Esophagus muscularis mucosa (tissue), 4 donors: ENCODE measurements at regions of chr7 and their contacts with region 1.

Region 1: GRCh38 chr7:6516387-6516983 is 34.8 kb downstream of the GRID2IP start:
- DNase-seq: peak; percentile 93
- H3K4me3 ChIP-seq: peak overlapping the region; percentile 28 to 45 (median 32)
- H3K27ac ChIP-seq: peak overlapping the region in 2 of 4 donors; percentile 26 to 52
- H3K4me1 ChIP-seq: peaks cover 3 to 9% (median 6%) of the 10 kb centered on the region in 4 donors
- H3K27me3 ChIP-seq: peaks cover 0 to 12% (median 0%) of the 10 kb centered on the region in 4 donors
- CTCF ChIP-seq: peak; percentile 80 to 89 (median 82)
- EP300 ChIP-seq: no peak
- POLR2A ChIP-seq: no peak

Region 2: DNA sequence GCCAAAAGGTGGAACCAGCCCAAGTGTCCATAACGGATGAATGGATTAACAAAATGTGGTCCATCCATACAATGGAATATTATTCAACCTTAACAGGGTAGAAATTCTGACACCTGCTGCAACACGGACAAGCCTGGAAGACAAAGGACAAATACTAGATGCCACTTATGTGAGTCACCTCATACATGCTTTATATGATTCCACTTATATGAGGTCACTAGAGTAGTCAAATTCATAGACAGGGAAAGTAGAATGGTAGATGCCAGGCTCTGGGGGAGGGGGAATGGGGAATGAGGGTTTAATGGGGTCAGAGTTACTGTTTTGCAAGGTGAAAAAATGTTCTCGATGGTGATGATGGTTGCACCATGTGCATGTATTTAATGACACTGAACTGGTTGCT is 210.0 kb before region 1 on chr7:
- intact Hi-C with region 1: no loop called
- DNase-seq: no peak
- H3K4me3 ChIP-seq: no peak overlapping the region
- H3K27ac ChIP-seq: no peak overlapping the region
- H3K4me1 ChIP-seq: no peaks in the 10 kb centered on the region
- H3K27me3 ChIP-seq: no peaks in the 10 kb centered on the region
- CTCF ChIP-seq: no peak
- EP300 ChIP-seq: no peak
- POLR2A ChIP-seq: no peak

Region 3: DNA sequence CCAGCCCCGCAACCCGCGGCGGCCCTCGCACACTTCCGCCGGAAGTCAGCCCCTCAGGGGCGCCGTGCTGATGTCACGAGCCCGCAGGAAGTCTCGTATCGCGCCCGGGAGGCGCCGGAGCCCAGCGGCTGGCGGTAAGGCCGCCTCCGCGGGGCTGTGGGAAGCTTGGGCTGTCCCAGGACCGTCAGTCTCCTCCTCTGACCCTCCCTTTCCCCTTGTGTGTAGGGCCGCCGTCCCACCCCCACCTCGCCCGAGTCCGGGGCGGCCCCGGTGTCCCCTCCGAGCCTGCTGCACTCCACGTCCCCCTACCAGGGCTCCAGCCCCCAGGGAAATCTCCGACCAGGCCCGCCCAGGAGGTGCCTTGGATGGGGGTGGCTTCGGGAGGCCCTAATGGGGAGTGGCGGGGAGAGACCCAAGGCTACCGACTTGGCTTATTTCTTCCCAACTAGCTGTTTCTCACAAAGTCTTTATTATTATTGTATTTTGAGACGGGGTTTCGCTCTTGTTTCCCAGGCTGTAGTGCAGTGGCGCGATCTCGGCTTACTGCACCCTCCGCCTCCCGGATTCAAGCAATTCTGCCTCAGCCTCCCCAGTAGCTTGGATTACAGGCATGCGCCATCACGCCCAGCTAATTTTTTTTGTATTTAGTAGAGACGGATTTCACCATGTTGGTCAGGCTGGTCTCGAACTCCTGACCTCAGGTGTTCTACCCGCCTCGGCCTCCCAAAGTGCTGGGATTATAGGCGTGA is 61.1 kb after region 1 on chr7 and contains the start of gene ZDHHC4:
- intact Hi-C with region 1: loop called (anchors 10 kb)
- DNase-seq: peak; percentile 95
- H3K4me3 ChIP-seq: peak within 1 kb of the TSS; percentile 66 to 87 (median 77)
- H3K27ac ChIP-seq: peak within 1 kb of the TSS; percentile 90 to 96 (median 94)
- H3K4me1 ChIP-seq: peaks cover 12 to 16% (median 15%) of the 10 kb centered on the region in 4 donors
- H3K27me3 ChIP-seq: no peaks in the 10 kb centered on the region
- CTCF ChIP-seq: peak in 1 of 3 experiments; percentile 24
- EP300 ChIP-seq: no peak
- POLR2A ChIP-seq: peak; percentile 89
- total RNA-seq, gene ZDHHC4: 41.5 to 57.4 (median 51.9) TPM

Region 4: DNA sequence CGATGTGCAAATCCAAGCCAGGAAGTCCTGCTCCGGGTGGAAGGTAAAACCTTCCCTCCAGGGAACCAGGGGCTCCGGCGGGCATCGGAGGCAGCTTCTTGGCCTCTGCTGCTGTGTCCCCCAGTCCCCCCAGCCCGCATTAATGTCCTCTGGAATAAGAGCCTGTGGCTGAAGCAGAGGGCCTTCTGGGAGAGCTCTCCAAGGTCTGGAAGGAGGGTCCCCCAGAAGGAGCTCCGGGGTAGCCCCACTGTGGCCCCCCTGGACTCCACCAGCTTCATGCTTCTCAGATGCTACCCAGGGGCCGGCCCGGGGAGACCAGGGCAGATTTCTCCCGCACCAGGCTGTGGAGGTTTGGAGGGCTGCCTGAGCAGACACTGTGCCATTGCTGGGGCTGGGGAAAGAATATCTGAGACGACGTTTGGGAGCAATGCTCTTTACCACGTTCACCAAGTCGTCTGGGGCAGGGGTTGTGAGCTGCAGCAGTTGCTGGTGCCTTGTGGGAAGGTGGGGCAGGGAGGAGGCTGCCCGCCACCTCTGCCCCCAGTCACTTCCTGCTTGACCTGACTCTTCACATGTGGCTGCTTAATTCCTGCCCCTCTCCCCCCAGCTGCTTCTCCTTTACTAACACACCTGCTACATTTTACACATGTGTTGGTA is 107.2 kb after region 1 on chr7:
- intact Hi-C with region 1: no loop called
- DNase-seq: no peak
- H3K4me3 ChIP-seq: no peak overlapping the region
- H3K27ac ChIP-seq: no peak overlapping the region
- H3K4me1 ChIP-seq: no peaks in the 10 kb centered on the region
- H3K27me3 ChIP-seq: no peaks in the 10 kb centered on the region
- CTCF ChIP-seq: no peak
- EP300 ChIP-seq: no peak
- POLR2A ChIP-seq: no peak